ENCODE measurements at regions of chr7 and their contacts with region 1.

Region 1: DNA sequence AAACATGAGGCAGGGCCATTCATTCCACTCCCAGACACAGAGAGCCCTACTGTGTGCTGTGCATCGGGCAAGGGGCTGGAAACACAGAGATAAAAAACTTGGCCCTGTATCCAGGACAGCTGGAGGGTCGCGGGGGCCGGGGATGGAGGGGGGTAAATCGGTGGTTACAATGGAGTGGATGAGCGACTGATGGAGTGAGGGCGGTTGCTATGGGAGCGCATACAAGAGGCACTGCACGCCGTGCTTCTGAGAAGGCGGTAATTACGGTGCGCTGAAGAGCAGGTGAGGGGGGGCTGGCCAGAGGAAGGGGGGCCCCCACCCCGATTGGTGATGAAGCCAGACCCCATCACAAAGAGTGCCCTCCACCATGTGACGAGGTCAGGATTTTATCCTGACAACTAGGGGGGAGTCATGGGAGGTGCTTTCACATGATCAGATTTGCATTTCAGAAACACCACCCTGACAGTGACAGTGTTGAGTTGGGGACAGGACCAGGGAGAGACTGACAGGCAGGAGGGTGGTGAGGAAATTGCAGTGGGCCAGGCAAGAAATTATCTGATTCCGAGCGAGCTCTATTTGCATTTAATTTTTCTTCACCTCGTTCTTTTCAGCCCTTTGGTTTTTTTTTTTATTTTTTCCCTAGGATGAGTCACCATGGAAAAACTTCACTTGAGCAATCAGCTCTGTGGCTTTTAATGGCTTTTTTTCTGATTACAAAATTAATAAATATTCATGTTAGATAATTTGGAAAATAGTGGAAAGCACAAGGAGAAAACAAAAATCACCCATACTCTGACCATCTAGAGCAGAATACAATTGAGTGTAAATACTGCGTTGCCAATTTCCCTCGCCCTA is 7.8 kb downstream of the CPA5 start:
- DNase-seq: peak; percentile 55

Region 2: GRCh38 chr7:130277763-130278643 is 74.4 kb before region 1 on chr7:
- intact Hi-C with region 1: loop called in 1 of 2 experiments (anchors 5 kb)
- DNase-seq: no peak

Region 3: GRCh38 chr7:130322587-130322986 is 29.9 kb before region 1 on chr7:
- intact Hi-C with region 1: loop called in 1 of 2 experiments (anchors 2 kb)
- DNase-seq: no peak

Region 4: DNA sequence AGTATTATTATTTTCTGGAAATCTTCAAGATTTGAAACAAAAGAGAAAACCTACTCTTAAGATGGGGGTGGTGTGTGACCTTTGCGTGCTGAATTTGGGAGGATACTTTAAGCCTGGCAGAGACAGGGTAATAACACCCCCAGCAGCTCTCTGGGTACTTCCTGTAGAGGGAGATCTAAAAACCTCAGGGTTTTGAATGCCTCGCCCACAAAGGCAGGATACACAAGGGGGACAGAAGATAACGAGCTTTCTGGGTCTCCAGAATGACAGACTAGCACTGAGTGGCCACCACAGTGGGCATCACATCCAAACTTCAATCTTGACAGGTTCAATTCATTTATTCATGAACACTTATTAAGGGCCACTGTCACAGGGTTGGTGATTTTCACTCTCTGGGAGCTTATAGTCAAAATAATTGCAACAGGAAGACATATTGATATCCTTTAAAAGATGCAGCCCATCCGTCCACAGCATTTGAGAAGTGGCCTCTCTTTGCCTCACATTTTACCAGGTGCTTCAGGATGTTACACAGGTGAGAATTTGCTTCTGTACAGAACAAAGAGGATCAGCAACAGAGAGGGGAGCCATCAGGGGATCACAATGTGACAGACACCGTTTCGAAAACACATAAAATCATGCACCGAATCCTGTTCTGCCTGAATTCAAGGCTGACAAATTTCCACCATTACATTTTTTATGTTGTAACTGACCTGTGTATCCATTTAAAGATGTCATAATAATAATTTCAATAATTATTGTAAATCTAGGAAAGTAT is 42.2 kb after region 1 on chr7:
- intact Hi-C with region 1: loop called in 1 of 2 experiments (anchors 2 kb)
- DNase-seq: no peak

Region 5: DNA sequence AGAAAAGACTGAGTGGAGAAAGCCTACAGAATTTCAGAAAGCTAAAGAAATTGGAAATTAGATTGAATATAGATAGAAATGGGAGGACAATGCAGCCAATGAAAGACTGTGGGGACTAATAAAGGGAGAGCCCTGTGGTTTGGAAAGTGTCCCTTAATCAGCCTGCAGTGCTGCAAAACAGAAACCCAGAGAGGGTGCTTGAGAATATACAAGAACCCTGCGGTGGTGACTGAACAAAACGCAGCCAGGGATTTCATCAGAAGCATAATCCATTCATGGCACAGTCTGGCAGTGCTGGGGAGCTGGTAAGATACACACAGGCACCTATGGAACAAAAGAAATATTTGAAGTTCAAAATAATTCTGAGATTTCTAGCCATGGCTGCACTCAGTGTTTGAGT is 69.2 kb after region 1 on chr7:
- intact Hi-C with region 1: no loop called
- DNase-seq: no peak